Caco-2 (cell line): ENCODE measurements at regions of chr2 and their contacts with region 1.

Region 1: GRCh38 chr2:8138923-8139667 is 542.8 kb upstream of the ID2 start:
- DNase-seq: no peak
- H3K4me3 ChIP-seq: no peak overlapping the region
- H3K4me3 Mint-ChIP-seq: no peak overlapping the region
- H3K27ac Mint-ChIP-seq: no peak overlapping the region
- H3K4me1 ChIP-seq: peaks cover 11% of the 10 kb centered on the region; the same call in 1 of the 2 replicates
- H3K4me1 Mint-ChIP-seq: peaks cover 11% of the 10 kb centered on the region
- H3K27me3 ChIP-seq: no peaks in the 10 kb centered on the region; the same call in 1 of the 2 replicates
- H3K27me3 Mint-ChIP-seq: no peaks in the 10 kb centered on the region
- CTCF ChIP-seq: no peak

Region 2: GRCh38 chr2:7795778-7796563 is 343.1 kb before region 1 on chr2:
- CTCF ChIA-PET with region 1: no interaction called
- POLR2A ChIA-PET with region 1: no interaction called
- intact Hi-C with region 1: no loop called
- DNase-seq: no peak
- H3K4me3 ChIP-seq: no peak overlapping the region
- H3K4me3 Mint-ChIP-seq: no peak overlapping the region
- H3K27ac Mint-ChIP-seq: no peak overlapping the region
- H3K4me1 ChIP-seq: no peaks in the 10 kb centered on the region
- H3K4me1 Mint-ChIP-seq: no peaks in the 10 kb centered on the region
- H3K27me3 ChIP-seq: no peaks in the 10 kb centered on the region
- H3K27me3 Mint-ChIP-seq: no peaks in the 10 kb centered on the region
- CTCF ChIP-seq: no peak

Region 3: DNA sequence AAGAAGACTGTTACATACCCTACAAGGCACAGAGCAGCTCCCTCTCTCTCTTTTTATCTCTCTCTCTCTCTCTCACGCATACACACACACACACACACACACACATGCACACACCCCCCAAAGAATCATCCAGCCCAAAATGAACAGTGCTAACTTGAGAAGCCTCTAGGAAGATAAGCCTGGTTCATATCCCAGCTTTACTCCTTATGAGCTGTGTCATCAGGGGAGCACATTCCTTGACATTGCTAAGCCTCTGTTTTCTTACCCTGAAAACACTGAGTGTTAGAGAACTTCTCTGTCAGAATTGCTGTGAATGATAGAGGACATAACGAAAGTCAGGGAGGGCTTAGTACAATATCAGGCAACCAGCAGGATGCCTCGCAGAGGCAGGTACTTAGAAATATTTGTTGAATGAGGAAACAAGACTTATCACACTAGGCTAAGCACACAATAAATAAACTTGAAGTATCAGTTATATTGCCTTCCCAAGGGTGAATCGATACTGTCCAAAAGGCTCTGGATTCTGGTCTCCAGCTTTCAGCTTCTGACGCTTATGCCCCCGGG is 182.9 kb before region 1 on chr2:
- CTCF ChIA-PET with region 1: no interaction called
- POLR2A ChIA-PET with region 1: no interaction called
- intact Hi-C with region 1: no loop called
- DNase-seq: no peak
- H3K4me3 ChIP-seq: no peak overlapping the region
- H3K4me3 Mint-ChIP-seq: no peak overlapping the region
- H3K27ac Mint-ChIP-seq: no peak overlapping the region
- H3K4me1 ChIP-seq: no peaks in the 10 kb centered on the region
- H3K4me1 Mint-ChIP-seq: no peaks in the 10 kb centered on the region
- H3K27me3 ChIP-seq: no peaks in the 10 kb centered on the region
- H3K27me3 Mint-ChIP-seq: peaks cover 8% of the 10 kb centered on the region
- CTCF ChIP-seq: no peak

Region 4: GRCh38 chr2:8022908-8023640 is 116.0 kb before region 1 on chr2:
- CTCF ChIA-PET with region 1: no interaction called
- POLR2A ChIA-PET with region 1: no interaction called
- intact Hi-C with region 1: no loop called
- DNase-seq: no peak
- H3K4me3 ChIP-seq: no peak overlapping the region
- H3K4me3 Mint-ChIP-seq: no peak overlapping the region
- H3K27ac Mint-ChIP-seq: no peak overlapping the region
- H3K4me1 ChIP-seq: no peaks in the 10 kb centered on the region
- H3K4me1 Mint-ChIP-seq: no peaks in the 10 kb centered on the region
- H3K27me3 ChIP-seq: no peaks in the 10 kb centered on the region
- H3K27me3 Mint-ChIP-seq: peaks cover 20% of the 10 kb centered on the region
- CTCF ChIP-seq: no peak

Region 5: DNA sequence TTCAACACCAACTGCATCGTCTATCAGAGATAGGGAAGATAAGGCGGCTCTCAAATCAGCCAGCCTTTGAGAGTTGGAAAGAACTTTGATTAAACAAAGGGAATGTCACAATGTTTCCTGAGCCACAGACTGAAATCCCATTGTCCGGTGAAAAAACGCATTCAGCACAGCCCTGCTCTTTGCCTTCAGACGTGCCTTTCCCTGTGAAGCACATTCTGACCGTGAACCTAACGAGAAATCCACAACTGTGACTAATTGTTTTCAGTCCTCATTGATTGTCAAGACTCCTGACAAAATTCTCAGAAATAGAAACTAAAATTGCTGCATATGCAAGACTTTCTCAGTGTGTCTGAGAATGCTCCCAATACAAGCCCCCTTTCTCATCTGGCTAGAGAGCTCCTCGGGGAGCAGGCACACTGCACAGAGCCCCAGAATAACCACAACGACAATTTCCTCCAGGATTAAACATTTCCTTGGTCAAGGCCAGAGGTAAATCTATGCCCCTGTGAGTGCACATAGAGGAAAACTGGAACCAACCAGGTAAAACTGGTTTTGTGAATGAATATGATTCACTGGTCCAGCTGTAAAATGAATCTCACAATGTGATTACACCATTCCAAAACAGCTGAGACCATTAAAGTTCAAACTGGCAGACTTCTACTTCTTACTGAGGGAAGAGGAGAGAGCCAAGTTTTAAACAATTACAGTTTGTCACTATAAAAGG is 19.2 kb before region 1 on chr2:
- CTCF ChIA-PET with region 1: no interaction called
- POLR2A ChIA-PET with region 1: no interaction called
- intact Hi-C with region 1: loop called (anchors 2 kb)
- DNase-seq: peak in 1 of 2 experiments; percentile 52
- H3K4me3 ChIP-seq: no peak overlapping the region
- H3K4me3 Mint-ChIP-seq: peak overlapping the region; percentile 67
- H3K27ac Mint-ChIP-seq: peak overlapping the region; percentile 78
- H3K4me1 ChIP-seq: peaks cover 35% of the 10 kb centered on the region
- H3K4me1 Mint-ChIP-seq: peaks cover 29% of the 10 kb centered on the region
- H3K27me3 ChIP-seq: no peaks in the 10 kb centered on the region
- H3K27me3 Mint-ChIP-seq: no peaks in the 10 kb centered on the region
- CTCF ChIP-seq: no peak

Region 6: GRCh38 chr2:8229546-8229986 is 90.5 kb after region 1 on chr2:
- CTCF ChIA-PET with region 1: no interaction called
- POLR2A ChIA-PET with region 1: no interaction called
- intact Hi-C with region 1: no loop called
- DNase-seq: no peak
- H3K4me3 ChIP-seq: no peak overlapping the region
- H3K4me3 Mint-ChIP-seq: no peak overlapping the region
- H3K27ac Mint-ChIP-seq: no peak overlapping the region
- H3K4me1 ChIP-seq: no peaks in the 10 kb centered on the region
- H3K4me1 Mint-ChIP-seq: no peaks in the 10 kb centered on the region
- H3K27me3 ChIP-seq: no peaks in the 10 kb centered on the region
- H3K27me3 Mint-ChIP-seq: no peaks in the 10 kb centered on the region
- CTCF ChIP-seq: no peak